ENCODE measurements at regions of chr6 and their contacts with region 1.

Region 1: DNA sequence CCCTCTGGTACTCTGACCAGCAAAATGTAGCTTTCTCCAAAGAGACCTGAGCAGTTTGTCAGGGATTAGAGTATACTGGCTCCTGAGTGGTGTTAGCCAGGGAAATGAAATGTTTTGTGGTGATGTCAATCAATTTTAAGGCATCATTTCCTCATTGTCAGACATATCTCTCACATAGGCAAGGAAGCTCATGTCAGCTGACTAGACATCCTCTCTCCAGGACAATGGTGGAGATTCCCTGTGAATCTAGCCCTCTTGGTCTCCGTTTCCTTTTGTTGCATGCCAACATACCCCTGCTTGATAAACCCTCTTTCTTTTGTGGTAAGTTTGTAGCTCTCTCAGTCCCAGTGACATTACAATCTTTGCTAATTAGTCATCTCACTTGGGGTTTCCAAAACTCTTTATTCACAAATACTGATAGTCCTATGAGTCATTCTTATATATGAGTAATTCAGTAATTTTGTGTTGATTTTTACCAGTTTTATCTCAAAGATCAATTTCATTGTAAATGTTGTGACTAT is 135.6 kb upstream of the PTPRK start:
- DNase-seq: peak; percentile 89
- ATAC-seq: peak; percentile 80
- H3K4me3 ChIP-seq: no peak overlapping the region; the same call in 1 of the 2 replicates
- H3K27ac ChIP-seq: peak overlapping the region; percentile 94
- H3K4me1 ChIP-seq: peaks cover 37% of the 10 kb centered on the region
- H3K27me3 ChIP-seq: no peaks in the 10 kb centered on the region
- CTCF ChIP-seq: no peak

Region 2: DNA sequence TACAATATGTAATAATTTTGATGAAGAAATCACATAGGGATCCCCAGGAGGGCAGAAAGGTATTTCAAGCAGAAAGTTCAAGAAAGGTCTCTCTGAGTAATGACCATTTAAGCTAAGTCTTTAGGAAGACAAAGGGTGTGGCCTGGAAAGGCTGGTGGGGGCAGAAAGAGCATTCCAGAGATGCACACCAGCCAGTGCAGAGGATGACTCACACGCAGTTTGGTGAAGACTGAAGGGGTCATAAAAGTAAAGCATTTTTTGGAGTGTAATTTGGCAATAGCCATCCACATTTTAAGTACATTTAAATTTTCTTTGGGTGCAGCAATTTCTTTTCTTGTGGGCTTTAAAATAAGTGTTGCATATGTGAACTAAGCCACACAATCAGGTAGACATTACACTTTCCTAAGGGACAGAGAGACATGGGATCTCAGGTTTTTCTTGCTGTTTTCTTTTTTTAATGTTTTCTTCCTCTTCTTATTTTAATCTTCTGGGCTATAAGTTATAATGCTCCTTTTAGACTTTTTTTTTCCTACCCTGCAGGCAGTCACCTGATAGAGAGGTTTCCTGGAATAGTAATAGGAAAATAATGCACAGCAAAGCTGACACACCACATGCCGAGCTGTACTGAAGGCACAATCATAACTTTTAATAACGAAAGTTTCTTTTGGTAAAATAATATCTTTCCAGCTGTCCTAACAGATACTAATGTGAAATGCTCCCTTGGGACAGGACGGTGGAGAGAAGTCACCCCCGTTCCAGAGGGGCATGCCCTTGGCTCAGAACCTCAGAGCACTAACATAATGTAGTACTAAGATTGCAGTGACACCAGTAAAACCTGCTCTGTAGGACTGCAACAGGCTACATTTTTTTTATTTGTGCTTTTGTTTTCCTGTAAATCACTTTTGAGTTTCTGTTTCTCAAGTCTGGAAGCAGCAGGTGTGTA is 86.0 kb before region 1 on chr6:
- CTCF ChIA-PET with region 1: no interaction called
- POLR2A ChIA-PET with region 1: no interaction called
- intact Hi-C with region 1: loop called (anchors 5 kb)
- DNase-seq: peak; percentile 92
- ATAC-seq: peak; percentile 76
- H3K4me3 ChIP-seq: peak overlapping the region; percentile 62
- H3K27ac ChIP-seq: peak overlapping the region; percentile 93
- H3K4me1 ChIP-seq: peaks cover 62% of the 10 kb centered on the region
- H3K27me3 ChIP-seq: no peaks in the 10 kb centered on the region
- CTCF ChIP-seq: no peak

Region 3: DNA sequence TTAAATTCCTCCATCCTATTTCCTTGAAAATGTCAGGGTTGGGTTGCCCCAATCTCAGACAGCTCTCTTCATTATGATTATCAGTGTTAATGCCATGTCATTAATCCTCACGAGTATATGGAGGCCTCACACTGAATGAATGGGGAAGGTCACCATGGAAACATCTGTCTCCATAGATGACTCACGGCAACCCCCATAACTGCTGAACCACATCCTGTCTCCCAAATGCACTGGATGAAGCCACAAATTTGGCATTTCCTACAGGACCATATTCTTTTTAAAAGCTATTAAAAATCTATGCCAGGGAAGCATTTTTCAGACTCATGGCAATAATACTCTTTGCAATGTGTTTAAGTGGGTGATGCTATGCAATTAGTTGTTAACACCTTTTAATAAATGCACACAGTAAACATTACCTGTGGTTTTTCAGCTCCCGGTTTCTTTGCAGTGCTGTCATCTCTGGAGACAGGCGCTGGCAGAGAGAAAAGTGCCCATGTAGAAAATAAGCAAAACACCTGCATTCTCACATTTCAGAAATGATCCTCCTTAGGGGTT is 55.6 kb before region 1 on chr6:
- CTCF ChIA-PET with region 1: no interaction called
- POLR2A ChIA-PET with region 1: no interaction called
- intact Hi-C with region 1: loop called (anchors 1 kb)
- DNase-seq: peak; percentile 80
- ATAC-seq: peak; percentile 68
- H3K4me3 ChIP-seq: peak overlapping the region; percentile 35; the same call in 1 of the 2 replicates
- H3K27ac ChIP-seq: peak overlapping the region; percentile 95
- H3K4me1 ChIP-seq: peaks cover 54% of the 10 kb centered on the region
- H3K27me3 ChIP-seq: no peaks in the 10 kb centered on the region
- CTCF ChIP-seq: no peak

Region 4: DNA sequence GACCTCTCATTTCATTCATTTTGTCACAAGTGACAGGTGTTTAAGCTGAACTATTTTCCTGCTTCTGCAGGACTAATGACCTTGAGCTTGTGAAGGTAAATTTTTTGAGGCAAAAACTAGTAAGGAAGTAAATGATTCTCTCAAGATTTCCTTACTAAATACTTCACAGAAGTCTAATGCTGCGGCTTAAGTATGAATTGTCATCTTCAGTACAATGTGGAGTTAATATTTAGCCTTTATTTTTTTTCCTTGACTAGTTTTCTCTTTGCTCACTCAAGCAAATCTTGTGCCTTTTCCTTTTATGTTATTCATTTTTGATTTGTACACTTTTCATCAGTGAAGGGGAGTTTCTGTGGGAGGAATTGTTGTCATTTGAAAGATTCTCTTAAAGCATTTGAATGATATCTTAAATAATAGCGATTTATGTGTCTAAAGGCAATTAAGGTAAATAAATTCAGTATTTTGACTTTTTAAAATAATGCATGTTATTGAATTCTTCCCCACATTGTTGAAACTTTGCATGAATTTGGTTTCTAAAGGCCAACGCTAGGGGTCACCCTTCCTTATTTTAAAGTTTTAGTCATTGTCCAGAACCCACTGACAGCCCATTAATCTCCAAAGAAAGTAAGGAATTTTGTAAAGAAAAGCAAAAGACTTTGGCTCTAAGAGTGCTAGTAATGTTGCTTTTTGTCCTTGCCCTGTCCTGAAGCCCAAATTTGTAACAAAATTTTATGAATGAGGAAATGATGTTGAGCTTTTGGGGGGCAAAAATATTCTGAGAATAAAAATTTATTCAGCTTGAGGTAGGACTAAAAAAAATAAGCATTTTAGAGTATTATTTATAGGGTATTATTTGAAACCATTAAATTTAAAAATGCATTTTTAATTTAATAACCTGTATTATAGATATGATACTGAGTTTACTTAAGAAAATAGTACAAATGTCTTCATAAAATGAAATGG is 69.5 kb after region 1 on chr6:
- CTCF ChIA-PET with region 1: no interaction called
- POLR2A ChIA-PET with region 1: no interaction called
- intact Hi-C with region 1: loop called (anchors 5 kb)
- DNase-seq: peak; percentile 55
- ATAC-seq: no peak
- H3K4me3 ChIP-seq: no peak overlapping the region
- H3K27ac ChIP-seq: no peak overlapping the region
- H3K4me1 ChIP-seq: peaks cover 26% of the 10 kb centered on the region
- H3K27me3 ChIP-seq: no peaks in the 10 kb centered on the region
- CTCF ChIP-seq: peak; percentile 71